ENCODE measurements at regions of chr3 and their contacts with region 1.

Region 1: GRCh38 chr3:139935016-139935865 is at the start of gene CLSTN2:
- DNase-seq: peak; percentile 83
- H3K4me3 ChIP-seq: peak within 1 kb of the TSS; percentile 54 to 63 (median 56)
- H3K27ac ChIP-seq: peak within 1 kb of the TSS in 2 of 4 donors; percentile 2 to 44
- H3K4me1 ChIP-seq: peaks cover 20 to 27% (median 24%) of the 10 kb centered on the region in 4 donors
- H3K27me3 ChIP-seq: peaks cover 0 to 52% (median 18%) of the 10 kb centered on the region in 4 donors
- CTCF ChIP-seq: peak in 1 of 3 experiments; percentile 7
- EP300 ChIP-seq: no peak
- POLR2A ChIP-seq: no peak
- total RNA-seq, gene CLSTN2: 3.7 to 9.5 (median 7.4) TPM

Region 2: GRCh38 chr3:140093742-140094141 is 158.5 kb after region 1 on chr3:
- intact Hi-C with region 1: no loop called
- DNase-seq: no peak
- H3K4me3 ChIP-seq: no peak overlapping the region
- H3K27ac ChIP-seq: peak overlapping the region in 3 of 4 donors; percentile 16 to 60 (median 19)
- H3K4me1 ChIP-seq: peaks cover 6 to 28% (median 19%) of the 10 kb centered on the region in 4 donors
- H3K27me3 ChIP-seq: no peaks in the 10 kb centered on the region
- CTCF ChIP-seq: no peak
- EP300 ChIP-seq: no peak
- POLR2A ChIP-seq: no peak

Region 3: DNA sequence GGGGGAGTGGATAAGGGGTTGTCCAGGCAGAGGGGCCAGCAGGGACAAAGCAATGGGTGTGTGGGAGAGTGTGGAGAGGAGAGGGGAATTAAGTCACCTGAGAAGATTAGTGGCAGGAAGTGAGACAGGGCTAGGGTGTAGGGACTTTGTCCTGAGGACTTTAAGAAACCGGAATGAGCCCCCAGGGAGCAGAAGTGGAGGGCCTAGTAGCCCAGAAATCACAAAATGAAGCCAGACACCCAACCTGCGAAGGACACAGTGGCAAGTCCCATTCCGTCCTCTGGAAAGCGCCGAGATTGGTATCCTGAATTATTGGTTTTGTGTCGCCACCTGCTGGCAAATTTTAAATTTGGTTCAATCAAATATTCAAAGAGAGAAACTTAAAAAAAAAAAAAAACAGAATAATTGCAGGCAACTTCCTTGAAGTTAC is 928.4 kb after region 1 on chr3:
- intact Hi-C with region 1: loop called (anchors 10 kb)
- DNase-seq: no peak
- H3K4me3 ChIP-seq: no peak overlapping the region
- H3K27ac ChIP-seq: no peak overlapping the region
- H3K4me1 ChIP-seq: peaks cover 0 to 3% (median 0%) of the 10 kb centered on the region in 4 donors
- H3K27me3 ChIP-seq: peaks cover 0 to 4% (median 0%) of the 10 kb centered on the region in 4 donors
- CTCF ChIP-seq: peak; percentile 39 to 45 (median 44)
- EP300 ChIP-seq: no peak
- POLR2A ChIP-seq: no peak